K562 (cell line): ENCODE measurements at regions of chr15 and their contacts with region 1.

Region 1: GRCh38 chr15:52331490-52332240 is 36.1 kb upstream of the MYO5C start:
- DNase-seq: peak in 2 of 4 experiments; percentile 14 to 29
- ATAC-seq: peak; percentile 62; the same call in 2 of the 3 replicates
- H3K4me3 ChIP-seq: no peak overlapping the region
- H3K27ac ChIP-seq: no peak overlapping the region
- H3K4me1 ChIP-seq: no peaks in the 10 kb centered on the region
- H3K27me3 ChIP-seq: no peaks in the 10 kb centered on the region
- CTCF ChIP-seq: peak; percentile 29 to 56 (median 36); a peak in 3 of 6 replicates
- EP300 ChIP-seq: no peak
- POLR2A ChIP-seq: no peak
- RAD21 ChIP-seq: peak; percentile 73 to 80

Region 2: GRCh38 chr15:52466134-52466701 is 134.6 kb after region 1 on chr15:
- CTCF ChIA-PET with region 1: no interaction called
- POLR2A ChIA-PET with region 1: no interaction called
- in situ Hi-C with region 1: no loop called
- intact Hi-C with region 1: loop called (anchors 10 kb)
- DNase-seq: no peak
- ATAC-seq: no peak
- H3K4me3 ChIP-seq: no peak overlapping the region
- H3K27ac ChIP-seq: no peak overlapping the region
- H3K4me1 ChIP-seq: no peaks in the 10 kb centered on the region
- H3K27me3 ChIP-seq: peaks cover 0 to 22% of the 10 kb centered on the region in 2 experiments; a peak in 3 of 5 replicates
- CTCF ChIP-seq: no peak
- EP300 ChIP-seq: no peak
- POLR2A ChIP-seq: no peak
- RAD21 ChIP-seq: no peak